OCI-LY7 (cell line): ENCODE measurements at regions of chr13 and their contacts with region 1.

Region 1: DNA sequence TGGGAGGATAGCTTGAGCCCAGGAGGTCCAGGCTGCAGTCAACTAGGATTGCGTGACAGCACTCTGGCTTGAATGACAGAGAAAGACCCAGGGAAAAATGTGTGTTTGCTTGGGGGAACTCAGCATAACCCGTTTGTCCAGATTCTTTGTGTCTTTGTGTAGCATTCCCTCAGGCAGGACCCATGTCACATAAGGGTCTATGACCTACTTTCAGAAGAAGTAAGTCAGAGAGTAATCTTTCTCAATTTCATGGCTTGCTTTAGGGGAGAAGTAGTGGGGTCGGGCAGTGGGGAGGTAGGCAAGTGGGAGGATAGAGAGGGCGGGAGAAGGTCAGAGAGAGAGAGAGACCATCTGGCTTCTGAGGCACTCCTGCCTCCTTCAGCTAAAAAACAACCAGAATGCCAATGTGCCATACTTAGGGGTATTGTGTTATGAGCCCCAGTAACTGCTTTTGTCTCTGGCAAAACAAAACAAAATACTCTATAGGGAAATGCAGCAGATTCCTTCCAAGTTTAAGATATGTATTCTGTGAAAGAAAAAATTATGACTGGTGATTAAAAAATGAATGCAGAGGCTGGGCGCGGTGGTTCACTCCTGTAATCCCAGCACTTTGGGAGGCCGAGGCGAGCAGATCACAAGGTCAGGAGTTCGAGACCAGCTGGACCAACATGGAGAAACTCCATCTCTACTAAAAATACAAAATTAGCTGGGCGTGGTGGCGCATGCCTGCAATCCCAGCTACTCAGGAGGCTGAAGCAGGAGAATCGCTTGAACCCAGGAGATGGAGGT is 12.1 kb upstream of the PSPC1 start:
- DNase-seq: no peak
- H3K4me3 ChIP-seq: no peak overlapping the region
- H3K27ac ChIP-seq: no peak overlapping the region
- H3K4me1 ChIP-seq: no peaks in the 10 kb centered on the region
- CTCF ChIP-seq: no peak

Region 2: DNA sequence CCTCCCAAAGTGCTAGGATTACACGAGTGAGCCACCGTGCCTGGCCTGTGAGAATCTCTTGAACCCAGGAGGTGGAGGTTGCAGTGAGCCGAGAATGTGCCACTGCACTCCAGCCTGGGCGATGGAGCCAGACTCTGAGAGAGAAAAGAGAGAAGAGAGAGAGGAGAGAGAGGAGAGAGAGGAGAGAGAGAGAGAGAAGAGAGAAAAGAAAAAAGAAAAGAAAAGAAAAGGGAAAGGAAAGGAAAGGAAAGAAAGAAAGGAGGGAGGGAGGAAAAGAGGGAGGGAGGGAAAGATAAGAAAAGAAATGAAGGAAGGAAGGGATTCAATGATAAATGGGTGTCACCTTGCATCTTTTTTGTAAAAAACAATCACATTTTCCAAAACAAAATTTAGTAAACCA is 10.9 kb after region 1 on chr13:
- CTCF ChIA-PET with region 1: no interaction called
- POLR2A ChIA-PET with region 1: interaction called, 10 read pairs
- intact Hi-C with region 1: no loop called
- DNase-seq: no peak
- H3K4me3 ChIP-seq: no peak overlapping the region
- H3K27ac ChIP-seq: no peak overlapping the region
- H3K4me1 ChIP-seq: no peaks in the 10 kb centered on the region
- CTCF ChIP-seq: no peak

Region 3: GRCh38 chr13:19981685-19982238 is 186.9 kb after region 1 on chr13:
- CTCF ChIA-PET with region 1: no interaction called
- POLR2A ChIA-PET with region 1: no interaction called
- intact Hi-C with region 1: no loop called
- DNase-seq: no peak
- H3K4me3 ChIP-seq: no peak overlapping the region
- H3K27ac ChIP-seq: no peak overlapping the region
- H3K4me1 ChIP-seq: peaks cover 14% of the 10 kb centered on the region
- CTCF ChIP-seq: no peak